Natural killer cell (primary cell): ENCODE measurements at regions of chr7 and their contacts with region 1.

Region 1: GRCh38 chr7:134605973-134606923 is 40.4 kb upstream of the BPGM start:
- DNase-seq: peak; percentile 40 to 83
- ATAC-seq: peak; percentile 92 to 99 (median 98)
- H3K4me3 ChIP-seq: no peak overlapping the region
- H3K4me3 Mint-ChIP-seq: peak overlapping the region; percentile 55
- H3K27ac ChIP-seq: no peak overlapping the region
- H3K27ac Mint-ChIP-seq: peak overlapping the region in 1 of 2 donors; percentile 23
- H3K4me1 ChIP-seq: no peaks in the 10 kb centered on the region
- H3K4me1 Mint-ChIP-seq: peaks cover 6% of the 10 kb centered on the region in 2 donors
- H3K27me3 ChIP-seq: no peaks in the 10 kb centered on the region
- H3K27me3 Mint-ChIP-seq: peaks cover 26 to 55% of the 10 kb centered on the region in 2 donors
- CTCF ChIP-seq: peak; percentile 94

Region 2: DNA sequence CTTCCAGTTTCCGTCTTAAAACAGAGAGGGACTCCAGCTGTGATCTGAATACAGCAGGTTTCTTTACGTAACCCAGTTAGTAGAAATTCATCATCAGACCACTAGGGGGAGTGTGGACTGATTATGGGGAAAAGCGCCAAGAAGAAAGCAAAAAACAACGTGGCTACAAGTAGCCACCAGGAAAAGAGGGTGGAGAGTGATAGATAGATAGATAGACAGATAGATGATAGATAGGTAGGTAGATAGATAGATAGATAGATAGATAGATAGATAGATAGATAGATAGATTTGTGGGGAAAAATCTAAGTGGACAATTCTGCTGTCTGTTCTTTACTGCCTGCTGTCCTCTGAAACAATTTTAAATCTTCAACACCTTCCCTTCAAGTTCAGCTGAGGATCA is 91.6 kb before region 1 on chr7:
- intact Hi-C with region 1: loop called (anchors 1 kb)
- DNase-seq: peak in 1 of 2 donors; percentile 81
- ATAC-seq: peak; percentile 67 to 87 (median 77)
- H3K4me3 ChIP-seq: no peak overlapping the region
- H3K4me3 Mint-ChIP-seq: no peak overlapping the region
- H3K27ac ChIP-seq: no peak overlapping the region
- H3K27ac Mint-ChIP-seq: no peak overlapping the region
- H3K4me1 ChIP-seq: no peaks in the 10 kb centered on the region
- H3K4me1 Mint-ChIP-seq: peaks cover 0 to 5% of the 10 kb centered on the region in 2 donors
- H3K27me3 ChIP-seq: no peaks in the 10 kb centered on the region
- H3K27me3 Mint-ChIP-seq: peaks cover 12 to 13% of the 10 kb centered on the region in 2 donors
- CTCF ChIP-seq: peak; percentile 92